Endothelial cell of umbilical vein (primary cell): ENCODE measurements at regions of chr1 and their contacts with region 1.

Region 1: DNA sequence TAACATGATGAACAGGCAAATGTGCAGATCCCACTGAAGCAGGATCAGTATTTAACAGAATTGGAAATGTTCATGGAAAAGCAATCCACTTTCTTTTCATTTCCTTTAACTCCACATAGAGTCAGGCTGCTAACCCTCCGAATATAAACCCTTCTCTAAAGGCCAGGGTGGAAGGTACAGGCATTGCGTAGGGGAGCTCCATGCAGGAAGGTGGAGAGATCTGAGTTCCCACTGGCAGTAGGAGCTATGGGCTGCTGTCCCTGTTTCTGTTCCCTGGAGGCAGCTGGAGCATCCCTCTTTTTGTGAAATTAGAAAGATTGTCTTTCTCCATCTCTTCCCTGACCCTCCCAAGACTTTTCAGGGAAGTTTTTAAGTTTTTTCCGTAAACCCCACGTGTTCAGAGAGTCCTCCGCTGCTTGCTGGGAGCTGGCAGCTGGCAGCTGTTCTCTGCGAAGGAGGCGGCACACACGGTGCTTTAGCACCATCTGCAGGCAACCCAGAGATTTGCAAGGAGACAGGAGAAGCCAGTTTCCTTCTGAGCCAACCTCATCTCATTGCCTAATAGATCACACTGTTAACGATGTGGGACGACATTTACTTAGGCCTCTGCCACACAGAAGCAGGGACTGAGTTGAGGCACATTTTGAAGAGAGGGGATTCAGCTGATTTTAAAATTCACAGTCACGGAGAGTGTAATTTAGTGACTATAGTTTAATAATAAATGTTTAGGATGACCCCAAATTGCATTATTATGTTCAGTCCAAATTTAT is 55.4 kb upstream of the HOOK1 start:
- DNase-seq: peak; percentile 85
- H3K4me3 ChIP-seq: no peak overlapping the region
- H3K27ac ChIP-seq: peak overlapping the region; percentile 44
- H3K4me1 ChIP-seq: peaks cover 5% of the 10 kb centered on the region
- H3K27me3 ChIP-seq: no peaks in the 10 kb centered on the region
- CTCF ChIP-seq: peak; percentile 86 to 92
- POLR2A ChIP-seq: no peak

Region 2: GRCh38 chr1:58546520-58547308 is 1212.6 kb before region 1 on chr1 and contains the start of gene OMA1:
- CTCF ChIA-PET with region 1: interaction called, 10 read pairs
- POLR2A ChIA-PET with region 1: no interaction called
- dilution Hi-C with region 1: no loop called
- intact Hi-C with region 1: loop called (anchors 1 kb)
- DNase-seq: peak; percentile 99
- H3K4me3 ChIP-seq: peak within 1 kb of the TSS; percentile 73 to 95 (median 76)
- H3K27ac ChIP-seq: peak within 1 kb of the TSS; percentile 84
- H3K4me1 ChIP-seq: peaks cover 4% of the 10 kb centered on the region
- H3K27me3 ChIP-seq: peaks cover 3 to 4% of the 10 kb centered on the region in 2 experiments
- CTCF ChIP-seq: peak; percentile 99
- POLR2A ChIP-seq: peak; percentile 76
- total RNA-seq, gene OMA1: 4.6 and 7.7 TPM in 2 replicates

Region 3: GRCh38 chr1:59083946-59084865 is 675.1 kb before region 1 on chr1:
- CTCF ChIA-PET with region 1: interaction called, 9 read pairs
- POLR2A ChIA-PET with region 1: no interaction called
- dilution Hi-C with region 1: no loop called
- intact Hi-C with region 1: loop called (anchors 5 kb)
- DNase-seq: peak; percentile 67
- H3K4me3 ChIP-seq: no peak overlapping the region
- H3K27ac ChIP-seq: peak overlapping the region; percentile 49
- H3K4me1 ChIP-seq: peaks cover 23% of the 10 kb centered on the region
- H3K27me3 ChIP-seq: no peaks in the 10 kb centered on the region
- CTCF ChIP-seq: no peak
- POLR2A ChIP-seq: peak; percentile 20

Region 4: GRCh38 chr1:59596441-59596861 is 162.9 kb before region 1 on chr1:
- CTCF ChIA-PET with region 1: interaction called, 4 read pairs
- POLR2A ChIA-PET with region 1: no interaction called
- dilution Hi-C with region 1: no loop called
- intact Hi-C with region 1: loop called (anchors 5 kb)
- DNase-seq: peak; percentile 98
- H3K4me3 ChIP-seq: no peak overlapping the region
- H3K27ac ChIP-seq: peak overlapping the region; percentile 83
- H3K4me1 ChIP-seq: peaks cover 29% of the 10 kb centered on the region
- H3K27me3 ChIP-seq: no peaks in the 10 kb centered on the region
- CTCF ChIP-seq: no peak
- POLR2A ChIP-seq: no peak

Region 5: GRCh38 chr1:59718064-59718988 is 41.0 kb before region 1 on chr1:
- CTCF ChIA-PET with region 1: interaction called, 10 read pairs
- POLR2A ChIA-PET with region 1: no interaction called
- dilution Hi-C with region 1: no loop called
- intact Hi-C with region 1: no loop called
- DNase-seq: no peak
- H3K4me3 ChIP-seq: no peak overlapping the region
- H3K27ac ChIP-seq: no peak overlapping the region
- H3K4me1 ChIP-seq: peaks cover 4% of the 10 kb centered on the region
- H3K27me3 ChIP-seq: no peaks in the 10 kb centered on the region
- CTCF ChIP-seq: peak in 1 of 2 donors; percentile 13
- POLR2A ChIP-seq: no peak